ENCODE measurements at regions of chr11 and their contacts with region 1.

Region 1: GRCh38 chr11:45655347-45655756 is 10.1 kb downstream of the CHST1 start:
- DNase-seq: peak; percentile 81 to 83
- ATAC-seq: peak; percentile 28 to 63 (median 49)
- H3K4me3 ChIP-seq: no peak overlapping the region
- H3K27ac ChIP-seq: no peak overlapping the region
- H3K4me1 ChIP-seq: peaks cover 5 to 47% (median 34%) of the 10 kb centered on the region in 9 donors
- H3K27me3 ChIP-seq: peaks cover 0 to 30% (median 3%) of the 10 kb centered on the region in 7 donors
- CTCF ChIP-seq: peak; percentile 88 to 97 (median 95)

Region 2: GRCh38 chr11:45405916-45406670 is 249.3 kb before region 1 on chr11:
- intact Hi-C with region 1: loop called in 7 of 10 experiments (anchors 5 to 10 kb)
- DNase-seq: no peak
- ATAC-seq: no peak
- H3K4me3 ChIP-seq: no peak overlapping the region
- H3K27ac ChIP-seq: no peak overlapping the region
- H3K4me1 ChIP-seq: no peaks in the 10 kb centered on the region
- H3K27me3 ChIP-seq: peaks cover 0 to 48% (median 17%) of the 10 kb centered on the region in 7 donors
- CTCF ChIP-seq: peak; percentile 10 to 69 (median 52)

Region 3: GRCh38 chr11:45538363-45538762 is 117.0 kb before region 1 on chr11:
- intact Hi-C with region 1: loop called in 7 of 10 experiments (anchors 2 to 10 kb)
- DNase-seq: peak; percentile 16 to 20
- ATAC-seq: peak; percentile 46 to 91 (median 82)
- H3K4me3 ChIP-seq: no peak overlapping the region
- H3K27ac ChIP-seq: no peak overlapping the region
- H3K4me1 ChIP-seq: no peaks in the 10 kb centered on the region
- H3K27me3 ChIP-seq: peaks cover 0 to 40% (median 9%) of the 10 kb centered on the region in 7 donors
- CTCF ChIP-seq: peak in 6 of 9 donors; percentile 27 to 58 (median 36)

Region 4: DNA sequence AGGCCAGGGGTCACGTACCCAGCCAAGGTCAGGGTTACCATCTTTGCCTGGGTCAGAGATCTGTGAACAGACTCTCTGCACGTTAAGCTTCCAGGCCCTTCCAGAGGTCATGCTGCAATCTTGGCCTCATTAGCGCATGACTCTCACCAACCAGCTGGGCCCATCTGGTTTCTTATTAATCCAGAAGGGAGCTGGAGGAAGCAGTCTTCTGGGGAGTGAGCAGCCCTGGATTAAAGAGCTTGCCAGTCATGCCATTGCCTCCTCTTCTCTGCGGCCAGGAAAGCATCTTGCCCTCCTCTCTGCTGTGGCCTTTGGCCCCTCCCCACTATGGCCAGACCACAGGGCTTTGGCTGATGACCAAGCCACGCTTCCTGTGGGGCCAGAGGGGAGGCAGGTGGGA is 47.4 kb before region 1 on chr11:
- intact Hi-C with region 1: loop called in 1 of 10 experiments (anchors 5 kb)
- DNase-seq: peak; percentile 16 to 52
- ATAC-seq: peak in 7 of 8 donors; percentile 31 to 75 (median 51)
- H3K4me3 ChIP-seq: no peak overlapping the region
- H3K27ac ChIP-seq: no peak overlapping the region
- H3K4me1 ChIP-seq: peaks cover 0 to 44% (median 26%) of the 10 kb centered on the region in 9 donors
- H3K27me3 ChIP-seq: peaks cover 0 to 20% (median 7%) of the 10 kb centered on the region in 7 donors
- CTCF ChIP-seq: no peak

Region 5: GRCh38 chr11:45704635-45705034 is 49.3 kb after region 1 on chr11:
- intact Hi-C with region 1: no loop called
- DNase-seq: no peak
- ATAC-seq: no peak
- H3K4me3 ChIP-seq: no peak overlapping the region
- H3K27ac ChIP-seq: no peak overlapping the region
- H3K4me1 ChIP-seq: no peaks in the 10 kb centered on the region
- H3K27me3 ChIP-seq: peaks cover 0 to 18% (median 9%) of the 10 kb centered on the region in 7 donors
- CTCF ChIP-seq: no peak

Region 6: DNA sequence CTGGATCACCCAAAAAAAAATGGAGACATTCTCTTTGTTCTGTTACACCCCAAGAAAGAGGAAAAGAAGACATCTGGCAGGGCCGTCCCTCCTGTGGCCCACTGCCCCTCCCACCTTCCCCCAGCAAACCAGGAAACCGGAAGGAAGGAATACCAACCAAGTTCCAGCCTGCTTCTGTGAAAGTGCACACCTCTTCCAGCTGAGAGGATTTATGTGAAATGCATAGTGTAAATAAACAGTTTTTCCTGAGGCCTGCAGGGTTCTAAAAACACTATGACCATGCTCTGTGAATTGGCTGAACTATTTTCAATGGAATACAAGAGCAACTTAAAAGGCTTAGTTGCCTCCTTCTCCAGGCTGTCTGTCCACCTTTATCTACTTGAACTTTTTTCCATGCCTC is 60.1 kb after region 1 on chr11:
- intact Hi-C with region 1: no loop called
- DNase-seq: no peak
- ATAC-seq: no peak
- H3K4me3 ChIP-seq: no peak overlapping the region
- H3K27ac ChIP-seq: no peak overlapping the region
- H3K4me1 ChIP-seq: no peaks in the 10 kb centered on the region
- H3K27me3 ChIP-seq: peaks cover 0 to 11% (median 0%) of the 10 kb centered on the region in 7 donors
- CTCF ChIP-seq: no peak

Region 7: DNA sequence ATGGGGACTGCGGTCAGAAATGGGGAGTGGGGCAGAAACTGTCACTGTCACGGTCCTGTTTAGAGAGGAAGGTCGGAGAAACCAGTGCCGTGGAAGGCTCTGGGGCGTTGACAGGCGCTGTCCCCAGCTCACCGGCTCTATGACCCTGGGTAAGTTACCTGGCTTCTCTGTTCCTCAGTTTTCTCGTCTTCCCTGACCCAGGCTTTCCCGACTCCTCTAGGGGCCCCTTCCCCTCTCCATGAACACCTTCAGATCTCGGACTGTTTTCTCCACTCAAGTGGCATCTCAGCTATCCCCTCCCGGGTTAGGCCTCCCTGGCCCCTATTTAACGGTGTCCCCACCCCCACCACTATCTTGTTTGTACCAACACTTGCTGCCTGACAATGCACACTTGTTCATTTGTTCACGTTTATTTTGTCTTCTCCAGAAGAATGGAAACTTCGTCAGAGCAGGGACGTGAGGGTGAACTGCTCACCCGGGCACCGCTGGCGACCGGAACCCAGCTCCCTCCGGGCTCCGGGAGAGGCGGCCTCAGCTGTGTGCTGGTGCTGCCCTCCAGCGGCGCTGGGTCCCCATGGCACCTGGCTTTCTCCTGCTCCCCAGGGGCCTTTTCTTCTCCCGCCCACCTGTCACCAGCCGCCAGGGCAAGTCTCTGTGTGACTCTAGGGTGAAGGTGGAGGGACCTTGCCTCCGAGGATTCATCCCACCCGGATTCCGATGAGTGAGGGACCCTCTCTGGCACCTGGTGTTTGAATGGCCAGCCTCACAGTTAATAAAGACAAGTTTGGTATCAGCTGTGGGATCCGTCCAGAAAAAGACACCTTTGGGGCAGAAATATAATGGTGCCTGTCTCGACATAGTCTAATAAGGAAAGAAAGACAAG is 116.5 kb after region 1 on chr11:
- intact Hi-C with region 1: loop called in 7 of 10 experiments (anchors 5 to 10 kb)
- DNase-seq: peak; percentile 82 to 88
- ATAC-seq: peak; percentile 94 to 98 (median 96)
- H3K4me3 ChIP-seq: peak overlapping the region; percentile 14 to 69 (median 58)
- H3K27ac ChIP-seq: peak overlapping the region in 9 of 10 donors; percentile 51 to 80 (median 73)
- H3K4me1 ChIP-seq: peaks cover 0 to 14% (median 4%) of the 10 kb centered on the region in 9 donors
- H3K27me3 ChIP-seq: no peaks in the 10 kb centered on the region
- CTCF ChIP-seq: peak; percentile 87 to 96 (median 93)